CD4-positive, alpha-beta memory T cell (primary cell): ENCODE measurements at regions of chr3 and their contacts with region 1.

Region 1: DNA sequence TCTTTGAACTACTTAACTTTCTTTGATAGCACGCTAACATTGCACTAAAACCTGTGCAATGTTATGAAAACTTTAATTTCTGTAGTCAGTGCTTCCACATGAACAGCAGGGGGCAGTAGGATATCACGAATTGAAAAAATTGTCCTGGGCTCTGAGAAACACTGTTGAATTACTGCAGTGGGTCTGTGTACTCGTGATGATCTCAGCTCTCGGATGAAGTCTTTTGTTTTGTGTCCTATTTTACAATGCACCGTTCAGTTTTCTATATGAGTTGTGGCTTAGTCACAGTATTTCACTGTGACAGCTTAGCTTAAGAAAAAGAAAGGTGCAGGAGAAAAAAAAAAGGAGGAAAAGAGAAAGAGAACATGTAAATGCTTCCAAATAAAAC is 141.3 kb upstream of the CCDC54 start:
- DNase-seq: peak; percentile 65 to 74 (median 68)
- H3K4me3 ChIP-seq: peak overlapping the region in 1 of 2 donors; percentile 32
- H3K4me3 Mint-ChIP-seq: peak overlapping the region; percentile 6 to 73 (median 49)
- H3K27ac ChIP-seq: no peak overlapping the region
- H3K27ac Mint-ChIP-seq: no peak overlapping the region
- H3K4me1 ChIP-seq: peaks cover 7% of the 10 kb centered on the region
- H3K4me1 Mint-ChIP-seq: peaks cover 9 to 13% (median 11%) of the 10 kb centered on the region in 4 donors
- H3K27me3 ChIP-seq: no peaks in the 10 kb centered on the region
- H3K27me3 Mint-ChIP-seq: peaks cover 4 to 5% of the 10 kb centered on the region in 2 donors

Region 2: DNA sequence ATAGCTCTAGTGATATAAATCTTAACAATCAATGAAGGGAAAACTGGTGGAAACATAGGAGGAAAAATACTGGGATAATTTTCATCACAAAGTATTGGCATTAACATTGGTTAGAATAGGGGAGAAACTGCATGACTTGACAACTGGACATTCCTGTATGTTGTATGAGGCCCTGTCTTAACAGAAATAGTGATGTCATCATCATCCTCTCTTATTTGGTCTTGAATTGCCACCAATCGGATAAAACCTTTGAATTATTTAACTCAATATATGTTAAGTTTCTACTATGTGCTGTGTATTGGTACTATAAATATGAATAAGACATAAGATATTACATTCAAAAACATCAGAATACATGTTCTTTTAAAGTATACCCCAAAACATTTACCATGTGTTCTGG is 11.2 kb after region 1 on chr3:
- CTCF ChIA-PET with region 1: interaction called, 10 read pairs
- POLR2A ChIA-PET with region 1: no interaction called
- intact Hi-C with region 1: no loop called
- DNase-seq: no peak
- H3K4me3 ChIP-seq: no peak overlapping the region
- H3K4me3 Mint-ChIP-seq: no peak overlapping the region
- H3K27ac ChIP-seq: no peak overlapping the region
- H3K27ac Mint-ChIP-seq: no peak overlapping the region
- H3K4me1 ChIP-seq: no peaks in the 10 kb centered on the region
- H3K4me1 Mint-ChIP-seq: no peaks in the 10 kb centered on the region
- H3K27me3 ChIP-seq: no peaks in the 10 kb centered on the region
- H3K27me3 Mint-ChIP-seq: no peaks in the 10 kb centered on the region

Region 3: DNA sequence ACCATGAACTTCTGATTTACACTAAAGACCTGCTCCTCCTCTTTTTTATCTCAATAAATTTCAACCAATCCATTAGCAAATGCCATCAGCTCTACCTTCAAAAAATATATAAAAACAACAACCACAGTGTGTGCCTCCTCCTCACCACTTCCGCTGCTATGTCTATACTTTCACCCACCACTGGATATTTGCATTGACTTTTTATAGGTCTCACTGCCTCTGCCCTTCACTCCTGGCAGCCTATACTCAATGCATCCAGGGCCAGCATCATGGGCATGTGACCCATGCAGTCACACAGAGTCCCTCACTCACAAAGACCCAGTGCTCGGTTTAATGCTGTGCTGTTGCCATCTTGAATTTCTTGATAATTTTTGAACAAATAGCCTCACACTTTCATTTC is 87.8 kb after region 1 on chr3:
- CTCF ChIA-PET with region 1: no interaction called
- POLR2A ChIA-PET with region 1: no interaction called
- intact Hi-C with region 1: no loop called
- DNase-seq: no peak
- H3K4me3 ChIP-seq: no peak overlapping the region
- H3K4me3 Mint-ChIP-seq: no peak overlapping the region
- H3K27ac ChIP-seq: no peak overlapping the region
- H3K27ac Mint-ChIP-seq: no peak overlapping the region
- H3K4me1 ChIP-seq: no peaks in the 10 kb centered on the region
- H3K4me1 Mint-ChIP-seq: no peaks in the 10 kb centered on the region
- H3K27me3 ChIP-seq: peaks cover 4% of the 10 kb centered on the region
- H3K27me3 Mint-ChIP-seq: no peaks in the 10 kb centered on the region

Region 4: GRCh38 chr3:107429320-107430181 is 193.6 kb after region 1 on chr3:
- CTCF ChIA-PET with region 1: interaction called, 17 read pairs
- POLR2A ChIA-PET with region 1: no interaction called
- intact Hi-C with region 1: loop called (anchors 1 kb)
- DNase-seq: peak; percentile 54 to 68 (median 61)
- H3K4me3 ChIP-seq: peak overlapping the region in 1 of 2 donors; percentile 51
- H3K4me3 Mint-ChIP-seq: peak overlapping the region; percentile 84 to 96 (median 90)
- H3K27ac ChIP-seq: no peak overlapping the region
- H3K27ac Mint-ChIP-seq: peak overlapping the region in 4 of 7 donors; percentile 17 to 64 (median 35)
- H3K4me1 ChIP-seq: peaks cover 18% of the 10 kb centered on the region
- H3K4me1 Mint-ChIP-seq: peaks cover 15 to 27% (median 19%) of the 10 kb centered on the region in 4 donors
- H3K27me3 ChIP-seq: no peaks in the 10 kb centered on the region
- H3K27me3 Mint-ChIP-seq: peaks cover 0 to 2% of the 10 kb centered on the region in 2 donors

Region 5: GRCh38 chr3:107543666-107544065 is 307.7 kb after region 1 on chr3:
- CTCF ChIA-PET with region 1: interaction called, 3 read pairs
- POLR2A ChIA-PET with region 1: no interaction called
- intact Hi-C with region 1: loop called (anchors 1 kb)
- DNase-seq: peak in 1 of 5 donors; percentile 3
- H3K4me3 ChIP-seq: no peak overlapping the region
- H3K4me3 Mint-ChIP-seq: no peak overlapping the region
- H3K27ac ChIP-seq: no peak overlapping the region
- H3K27ac Mint-ChIP-seq: no peak overlapping the region
- H3K4me1 ChIP-seq: no peaks in the 10 kb centered on the region
- H3K4me1 Mint-ChIP-seq: peaks cover 15 to 43% (median 28%) of the 10 kb centered on the region in 4 donors
- H3K27me3 ChIP-seq: no peaks in the 10 kb centered on the region
- H3K27me3 Mint-ChIP-seq: no peaks in the 10 kb centered on the region

Region 6: GRCh38 chr3:108406661-108407206 is 1170.8 kb after region 1 on chr3:
- CTCF ChIA-PET with region 1: interaction called, 4 read pairs
- POLR2A ChIA-PET with region 1: no interaction called
- intact Hi-C with region 1: loop called (anchors 10 kb)
- DNase-seq: peak in 3 of 5 donors; percentile 24 to 61 (median 48)
- H3K4me3 ChIP-seq: no peak overlapping the region
- H3K4me3 Mint-ChIP-seq: no peak overlapping the region
- H3K27ac ChIP-seq: no peak overlapping the region
- H3K27ac Mint-ChIP-seq: peak overlapping the region in 1 of 7 donors; percentile 8
- H3K4me1 ChIP-seq: no peaks in the 10 kb centered on the region
- H3K4me1 Mint-ChIP-seq: peaks cover 0 to 2% (median 0%) of the 10 kb centered on the region in 4 donors
- H3K27me3 ChIP-seq: no peaks in the 10 kb centered on the region
- H3K27me3 Mint-ChIP-seq: no peaks in the 10 kb centered on the region